ENCODE measurements at regions of chr10 and their contacts with region 1.

Region 1: GRCh38 chr10:7622969-7623368 is 43.8 kb downstream of the ITIH5 start:
- DNase-seq: no peak
- ATAC-seq: peak; percentile 56

Region 2: DNA sequence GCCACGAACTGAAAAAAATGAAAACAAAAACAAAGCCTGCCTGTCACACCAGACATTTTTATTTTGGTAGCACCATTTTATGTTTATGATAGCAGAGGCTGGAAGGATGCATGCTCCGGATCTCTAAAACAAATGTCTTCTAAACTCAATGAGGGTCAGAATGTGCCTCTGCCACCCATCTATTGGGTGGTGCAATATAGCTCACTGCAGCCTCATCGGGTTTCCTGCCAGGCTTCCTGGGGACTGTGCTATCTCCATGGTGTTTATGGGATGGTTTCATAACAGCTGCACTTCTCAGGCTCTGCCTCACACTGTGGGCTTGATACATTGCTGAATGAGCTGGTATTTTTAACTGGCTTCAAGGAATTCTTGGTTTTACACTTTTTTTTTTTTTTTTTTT is 50.6 kb before region 1 on chr10:
- intact Hi-C with region 1: no loop called
- DNase-seq: no peak
- ATAC-seq: peak; percentile 88

Region 3: GRCh38 chr10:7671121-7671520 is 48.2 kb after region 1 on chr10:
- intact Hi-C with region 1: loop called (anchors 5 kb)
- DNase-seq: no peak
- ATAC-seq: no peak

Measured in Right ventricle myocardium inferior (tissue), 1 donor.